Heart left ventricle (tissue), 16 donors: ENCODE measurements at regions of chr2 and their contacts with region 1.

Region 1: DNA sequence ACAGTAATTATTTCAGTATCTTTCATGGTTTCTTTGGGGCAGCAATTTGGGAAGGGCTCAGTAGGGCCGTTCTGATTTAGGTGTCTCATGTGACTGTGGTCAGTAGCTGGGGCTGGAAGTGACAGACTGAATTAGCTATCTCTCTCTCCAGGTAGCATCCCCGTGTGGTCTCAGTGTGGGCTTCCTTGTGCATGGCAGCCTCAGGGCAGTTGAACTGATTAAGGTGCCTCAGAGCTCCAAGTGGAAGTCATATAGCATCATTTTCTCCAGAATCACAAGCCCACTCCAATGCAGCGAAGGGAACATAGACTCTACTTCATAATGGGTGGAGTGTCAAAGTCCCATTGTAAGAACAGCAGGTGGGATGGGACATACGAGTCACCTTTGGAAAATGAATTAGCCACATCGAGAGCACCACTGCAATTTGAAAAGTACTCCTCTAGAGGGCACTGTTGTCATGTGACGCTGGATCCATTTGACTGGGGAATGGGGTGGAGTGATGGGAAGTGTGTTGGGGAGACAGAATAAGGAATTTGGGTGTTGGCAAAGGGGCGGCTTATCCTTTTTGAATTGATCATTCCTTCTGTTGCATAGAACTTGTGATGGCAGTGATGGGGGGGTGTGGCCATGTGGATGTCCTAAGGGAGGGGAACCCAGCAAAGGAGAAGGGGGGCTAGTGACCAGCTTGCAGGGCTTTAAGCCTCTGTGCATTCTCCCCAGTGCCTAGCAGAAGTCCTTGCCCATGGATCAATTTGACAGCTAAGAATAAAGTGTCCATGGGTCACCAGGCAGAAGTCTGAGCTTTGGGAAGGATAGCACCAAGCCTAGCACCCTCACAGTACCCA is 39.3 kb upstream of the FAM136A start:
- DNase-seq: no peak
- ATAC-seq: peak in 3 of 4 donors; percentile 39 to 66 (median 60)
- H3K4me3 ChIP-seq: no peak overlapping the region
- H3K27ac ChIP-seq: no peak overlapping the region
- H3K4me1 ChIP-seq: no peaks in the 10 kb centered on the region
- H3K27me3 ChIP-seq: peaks cover 0 to 27% (median 2%) of the 10 kb centered on the region in 9 donors
- CTCF ChIP-seq: peak; percentile 50 to 80 (median 75)
- POLR2A ChIP-seq: no peak

Region 2: DNA sequence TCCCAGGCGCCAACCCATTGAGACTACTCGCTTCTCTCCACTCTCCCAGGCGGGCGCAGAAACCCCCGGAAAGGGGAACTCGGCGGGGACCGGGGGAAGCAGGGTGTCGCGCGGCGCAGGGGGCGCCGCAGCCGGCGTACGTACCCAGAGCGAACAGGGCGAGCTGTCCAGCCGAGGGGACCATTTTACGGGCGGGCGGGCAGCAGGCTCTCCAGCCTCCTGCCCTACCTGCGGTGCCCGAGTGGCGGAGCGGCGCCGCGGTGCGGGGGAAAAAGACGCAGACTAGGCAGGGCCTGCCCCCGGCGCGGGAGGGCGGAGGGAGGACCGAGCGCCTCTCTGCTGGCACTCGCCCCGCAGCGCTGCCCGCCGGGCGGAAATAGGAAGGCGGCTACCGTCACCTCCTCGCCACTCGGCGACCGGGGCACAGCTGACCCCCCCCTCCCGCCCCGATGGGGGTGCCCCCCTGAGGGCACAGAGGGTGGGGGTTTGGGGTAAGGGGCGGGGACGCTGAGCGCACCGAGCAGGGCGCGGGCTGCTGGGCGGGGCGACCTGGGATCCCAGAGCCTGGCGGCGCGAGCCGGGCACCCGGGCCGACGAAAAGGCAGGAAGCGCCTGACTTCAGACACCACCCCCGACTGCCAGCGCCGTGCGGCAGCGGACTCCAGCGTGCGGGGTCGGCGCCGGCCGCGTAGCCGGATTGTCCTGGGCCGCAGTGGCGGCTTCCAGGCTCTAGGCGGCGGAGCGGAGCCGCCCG is 212.6 kb after region 1 on chr2 and contains the start of gene TGFA:
- intact Hi-C with region 1: loop called in 2 of 10 experiments (anchors 10 kb)
- DNase-seq: peak; percentile 50 to 82 (median 60)
- ATAC-seq: peak; percentile 55 to 94 (median 88)
- H3K4me3 ChIP-seq: peak within 1 kb of the TSS; percentile 63 to 85 (median 70)
- H3K27ac ChIP-seq: peak within 1 kb of the TSS in 10 of 12 donors; percentile 13 to 81 (median 44)
- H3K4me1 ChIP-seq: peaks cover 0 to 23% (median 11%) of the 10 kb centered on the region in 12 donors
- H3K27me3 ChIP-seq: peaks cover 8 to 73% (median 21%) of the 10 kb centered on the region in 9 donors
- CTCF ChIP-seq: peak in 11 of 12 donors; percentile 47 to 75 (median 66)
- POLR2A ChIP-seq: peak in 1 of 2 donors; percentile 16
- total RNA-seq, gene TGFA: 0.56 to 4.9 (median 1.0) TPM

Region 3: DNA sequence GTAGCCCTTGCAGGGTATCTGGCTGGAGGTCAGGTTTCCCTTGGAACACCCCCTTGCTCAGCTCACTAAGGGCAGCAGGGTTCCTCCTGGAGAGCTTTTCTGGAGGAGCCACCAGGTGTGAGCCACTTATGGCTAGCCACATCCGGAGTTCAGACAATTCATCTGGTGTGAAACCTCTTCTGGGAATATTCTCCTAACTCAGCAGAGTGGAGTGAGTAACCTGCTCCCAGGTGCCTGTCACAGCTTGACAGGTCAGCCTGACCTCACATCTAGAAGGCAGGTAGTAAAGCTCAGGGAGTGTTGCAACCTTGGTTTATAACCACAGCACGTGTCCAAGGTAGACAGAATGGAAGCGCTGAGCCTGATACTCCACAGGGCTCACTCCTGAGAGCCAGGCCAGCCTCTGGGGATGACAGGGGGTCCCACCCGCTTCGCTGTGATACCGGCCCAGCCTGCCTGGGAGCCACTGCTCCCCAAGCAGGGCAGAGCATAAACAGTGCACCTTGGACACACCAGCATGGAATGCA is 275.1 kb after region 1 on chr2:
- intact Hi-C with region 1: loop called (anchors 1 to 2 kb)
- DNase-seq: no peak
- ATAC-seq: no peak
- H3K4me3 ChIP-seq: no peak overlapping the region
- H3K27ac ChIP-seq: no peak overlapping the region
- H3K4me1 ChIP-seq: peaks cover 0 to 4% (median 0%) of the 10 kb centered on the region in 12 donors
- H3K27me3 ChIP-seq: peaks cover 0 to 16% (median 0%) of the 10 kb centered on the region in 9 donors
- CTCF ChIP-seq: no peak
- POLR2A ChIP-seq: no peak

Region 4: GRCh38 chr2:70647873-70648481 is 306.8 kb after region 1 on chr2:
- intact Hi-C with region 1: loop called in 8 of 10 experiments (anchors 1 to 10 kb)
- DNase-seq: peak in 3 of 5 donors; percentile 31 to 48 (median 47)
- ATAC-seq: peak in 3 of 4 donors; percentile 61 to 67 (median 62)
- H3K4me3 ChIP-seq: no peak overlapping the region
- H3K27ac ChIP-seq: no peak overlapping the region
- H3K4me1 ChIP-seq: no peaks in the 10 kb centered on the region
- H3K27me3 ChIP-seq: peaks cover 0 to 28% (median 0%) of the 10 kb centered on the region in 9 donors
- CTCF ChIP-seq: peak; percentile 75 to 99 (median 88)
- POLR2A ChIP-seq: no peak